ENCODE measurements at regions of chr4 and their contacts with region 1.

Region 1: GRCh38 chr4:39977489-39978377 is at the start of gene PDS5A:
- DNase-seq: peak; percentile 95
- ATAC-seq: peak; percentile 84
- H3K4me3 ChIP-seq: peak within 1 kb of the TSS; percentile 55 to 93 (median 83)
- H3K4me3 Mint-ChIP-seq: peak within 1 kb of the TSS; percentile 91
- H3K27ac ChIP-seq: peak within 1 kb of the TSS; percentile 71 to 83
- H3K27ac Mint-ChIP-seq: peak within 1 kb of the TSS; percentile 93
- H3K4me1 ChIP-seq: peaks cover 11 to 15% of the 10 kb centered on the region in 2 donors
- H3K4me1 Mint-ChIP-seq: peaks cover 31% of the 10 kb centered on the region
- H3K27me3 ChIP-seq: no peaks in the 10 kb centered on the region
- H3K27me3 Mint-ChIP-seq: no peaks in the 10 kb centered on the region
- CTCF ChIP-seq: peak; percentile 79
- total RNA-seq, gene PDS5A: 111 and 116 TPM in 2 replicates

Region 2: GRCh38 chr4:39044364-39044955 is 933.3 kb before region 1 on chr4:
- CTCF ChIA-PET with region 1: no interaction called
- POLR2A ChIA-PET with region 1: no interaction called
- intact Hi-C with region 1: loop called (anchors 10 kb)
- DNase-seq: peak; percentile 99
- ATAC-seq: peak; percentile 85
- H3K4me3 ChIP-seq: peak overlapping the region; percentile 66 to 94 (median 75)
- H3K4me3 Mint-ChIP-seq: peak overlapping the region; percentile 80
- H3K27ac ChIP-seq: peak overlapping the region; percentile 93 to 95
- H3K27ac Mint-ChIP-seq: peak overlapping the region; percentile 90
- H3K4me1 ChIP-seq: peaks cover 45 to 48% of the 10 kb centered on the region in 2 donors
- H3K4me1 Mint-ChIP-seq: peaks cover 59% of the 10 kb centered on the region
- H3K27me3 ChIP-seq: no peaks in the 10 kb centered on the region
- H3K27me3 Mint-ChIP-seq: no peaks in the 10 kb centered on the region
- CTCF ChIP-seq: no peak

Region 3: DNA sequence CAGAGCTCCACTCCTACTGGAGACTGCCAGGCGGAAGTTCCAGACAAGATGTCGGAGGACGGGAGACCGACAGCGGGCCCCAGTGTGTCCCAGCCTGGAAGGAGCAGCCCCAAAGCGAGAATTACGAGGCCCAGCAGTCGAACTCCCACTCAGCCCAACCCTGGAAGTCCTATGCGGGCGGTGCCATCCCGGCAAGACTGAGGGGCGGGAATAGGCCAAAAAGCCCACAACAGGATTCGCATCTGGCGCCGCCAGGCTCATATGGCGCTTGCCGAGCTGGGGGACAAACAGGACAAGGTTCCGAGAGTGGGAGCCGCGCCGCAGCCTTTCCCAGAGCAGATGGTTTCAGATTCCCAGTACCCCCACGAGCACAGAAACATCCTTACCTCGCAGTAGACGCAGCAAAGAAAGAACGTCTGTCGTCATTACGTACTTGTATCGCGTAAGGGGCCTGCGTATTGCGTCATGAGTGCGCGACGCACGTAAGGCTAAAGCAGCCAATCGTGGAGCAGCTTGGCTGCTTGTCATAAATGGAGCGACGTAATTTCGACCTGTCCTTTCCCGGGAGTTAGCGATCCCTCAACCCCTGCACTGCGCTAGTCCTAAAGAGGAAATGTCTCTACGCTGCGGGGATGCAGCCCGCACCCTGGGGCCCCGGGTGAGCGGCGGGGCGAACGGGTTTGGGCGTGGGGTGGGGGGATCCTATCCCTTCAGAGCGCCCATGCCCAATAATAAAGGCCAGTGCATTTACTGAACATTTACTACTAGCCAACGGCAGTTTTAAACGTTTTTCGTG is 519.0 kb before region 1 on chr4 and contains the starts of genes LIAS and RPL9:
- CTCF ChIA-PET with region 1: interaction called, 4 read pairs
- POLR2A ChIA-PET with region 1: interaction called, 6 read pairs
- intact Hi-C with region 1: loop called (anchors 1 kb)
- DNase-seq: peak; percentile 98
- ATAC-seq: peak; percentile 86
- H3K4me3 ChIP-seq: peak within 1 kb of the TSS; percentile 77 to 100 (median 98)
- H3K4me3 Mint-ChIP-seq: peak within 1 kb of the TSS; percentile 97
- H3K27ac ChIP-seq: peak within 1 kb of the TSS; percentile 98 to 99
- H3K27ac Mint-ChIP-seq: peak within 1 kb of the TSS; percentile 99
- H3K4me1 ChIP-seq: peaks cover 19 to 27% of the 10 kb centered on the region in 2 donors
- H3K4me1 Mint-ChIP-seq: peaks cover 38% of the 10 kb centered on the region
- H3K27me3 ChIP-seq: no peaks in the 10 kb centered on the region
- H3K27me3 Mint-ChIP-seq: no peaks in the 10 kb centered on the region
- CTCF ChIP-seq: no peak
- total RNA-seq, gene LIAS: 20.9 and 24.7 TPM in 2 replicates
- total RNA-seq, gene RPL9: 2,031 and 2,048 TPM in 2 replicates

Region 4: DNA sequence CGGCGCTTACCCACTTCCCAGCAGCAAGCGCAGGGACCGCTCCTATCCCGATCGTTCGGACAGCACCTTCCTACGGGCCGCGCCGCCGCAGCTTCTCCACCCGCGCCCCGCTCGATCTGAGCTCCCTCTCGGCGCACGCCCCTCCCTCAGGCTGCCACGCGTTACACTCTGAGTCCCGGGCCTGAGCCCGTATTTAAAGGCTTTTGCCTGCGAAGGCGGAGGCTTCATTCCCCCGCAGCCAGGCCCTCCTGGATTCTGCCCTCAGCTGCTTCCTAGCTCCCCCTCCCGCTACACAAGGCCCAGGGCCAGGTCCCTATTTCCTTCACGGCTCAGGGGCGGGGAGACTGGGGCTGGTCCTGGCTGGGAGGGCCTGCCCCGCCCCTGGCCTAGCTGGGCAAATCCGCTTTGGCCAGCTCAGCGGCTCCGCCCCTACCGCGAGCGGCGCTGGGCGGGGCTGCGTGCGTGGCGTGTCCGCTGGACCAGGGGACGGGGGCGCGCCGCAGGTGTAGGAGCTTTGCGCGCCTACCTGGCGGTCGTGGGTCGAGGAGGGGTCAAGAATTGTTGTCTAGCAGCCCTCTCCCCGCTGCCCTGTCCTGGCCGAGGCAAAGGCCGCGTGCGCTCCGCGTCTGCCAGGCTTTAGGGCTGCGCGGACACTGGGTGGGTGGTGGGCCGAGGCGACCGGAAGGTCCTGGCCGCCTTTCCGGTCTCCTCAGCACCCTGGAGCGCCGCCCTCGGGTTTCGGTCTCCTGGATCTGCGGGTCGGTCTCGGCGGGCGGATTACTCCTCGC is 450.3 kb before region 1 on chr4 and contains the start of gene UGDH:
- CTCF ChIA-PET with region 1: interaction called, 3 read pairs
- POLR2A ChIA-PET with region 1: no interaction called
- intact Hi-C with region 1: loop called (anchors 1 kb)
- DNase-seq: peak; percentile 93
- ATAC-seq: peak; percentile 99
- H3K4me3 ChIP-seq: peak within 1 kb of the TSS; percentile 46 to 98 (median 72)
- H3K4me3 Mint-ChIP-seq: peak within 1 kb of the TSS; percentile 98
- H3K27ac ChIP-seq: peak within 1 kb of the TSS; percentile 51 to 86
- H3K27ac Mint-ChIP-seq: peak within 1 kb of the TSS; percentile 96
- H3K4me1 ChIP-seq: peaks cover 14 to 15% of the 10 kb centered on the region in 2 donors
- H3K4me1 Mint-ChIP-seq: peaks cover 21% of the 10 kb centered on the region
- H3K27me3 ChIP-seq: no peaks in the 10 kb centered on the region
- H3K27me3 Mint-ChIP-seq: no peaks in the 10 kb centered on the region
- CTCF ChIP-seq: no peak
- total RNA-seq, gene UGDH: 18.5 and 25.4 TPM in 2 replicates

Region 5: GRCh38 chr4:39697740-39698423 is 279.9 kb before region 1 on chr4 and contains the start of gene UBE2K:
- CTCF ChIA-PET with region 1: interaction called, 4 read pairs
- POLR2A ChIA-PET with region 1: interaction called, 7 read pairs
- intact Hi-C with region 1: loop called (anchors 1 kb)
- DNase-seq: peak; percentile 94
- ATAC-seq: peak; percentile 92
- H3K4me3 ChIP-seq: peak within 1 kb of the TSS; percentile 74 to 98 (median 96)
- H3K4me3 Mint-ChIP-seq: peak within 1 kb of the TSS; percentile 100
- H3K27ac ChIP-seq: peak within 1 kb of the TSS; percentile 87 to 90
- H3K27ac Mint-ChIP-seq: peak within 1 kb of the TSS; percentile 99
- H3K4me1 ChIP-seq: peaks cover 23 to 29% of the 10 kb centered on the region in 2 donors
- H3K4me1 Mint-ChIP-seq: peaks cover 41% of the 10 kb centered on the region
- H3K27me3 ChIP-seq: no peaks in the 10 kb centered on the region
- H3K27me3 Mint-ChIP-seq: no peaks in the 10 kb centered on the region
- CTCF ChIP-seq: no peak
- total RNA-seq, gene UBE2K: 46.3 and 51.0 TPM in 2 replicates

Region 6: GRCh38 chr4:39889226-39889625 is 88.5 kb before region 1 on chr4:
- CTCF ChIA-PET with region 1: no interaction called
- POLR2A ChIA-PET with region 1: no interaction called
- intact Hi-C with region 1: loop called (anchors 5 kb)
- DNase-seq: no peak
- ATAC-seq: no peak
- H3K4me3 ChIP-seq: no peak overlapping the region
- H3K4me3 Mint-ChIP-seq: no peak overlapping the region
- H3K27ac ChIP-seq: no peak overlapping the region
- H3K27ac Mint-ChIP-seq: no peak overlapping the region
- H3K4me1 ChIP-seq: peaks cover 5 to 10% of the 10 kb centered on the region in 2 donors
- H3K4me1 Mint-ChIP-seq: peaks cover 13% of the 10 kb centered on the region
- H3K27me3 ChIP-seq: no peaks in the 10 kb centered on the region
- H3K27me3 Mint-ChIP-seq: no peaks in the 10 kb centered on the region
- CTCF ChIP-seq: no peak

Region 7: DNA sequence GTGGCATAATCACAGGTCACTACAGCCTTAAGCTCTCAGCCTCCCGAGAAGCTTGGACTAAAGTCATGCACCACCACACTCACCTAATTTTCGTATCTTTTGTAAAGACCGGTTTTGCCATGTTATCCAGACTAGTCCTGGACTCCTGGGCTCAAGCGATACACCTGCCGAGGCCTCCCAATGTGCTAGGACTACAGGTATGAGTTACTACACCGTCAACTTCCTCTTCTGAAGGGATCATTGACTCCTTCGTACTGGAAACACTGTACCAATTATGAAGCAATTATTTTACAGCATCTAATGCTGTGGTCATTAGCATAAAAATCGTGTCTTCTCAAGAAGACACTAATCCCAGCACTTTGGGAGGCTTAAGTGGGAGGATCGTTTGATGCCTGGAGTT is 35.2 kb before region 1 on chr4:
- CTCF ChIA-PET with region 1: interaction called, 4 read pairs
- POLR2A ChIA-PET with region 1: interaction called, 5 read pairs
- intact Hi-C with region 1: loop called (anchors 1 kb)
- DNase-seq: peak; percentile 47
- ATAC-seq: no peak
- H3K4me3 ChIP-seq: peak overlapping the region in 2 of 5 experiments; percentile 4 to 28
- H3K4me3 Mint-ChIP-seq: peak overlapping the region; percentile 40
- H3K27ac ChIP-seq: peak overlapping the region; percentile 23 to 55
- H3K27ac Mint-ChIP-seq: peak overlapping the region; percentile 23
- H3K4me1 ChIP-seq: peaks cover 47 to 59% of the 10 kb centered on the region in 2 donors
- H3K4me1 Mint-ChIP-seq: peaks cover 72% of the 10 kb centered on the region
- H3K27me3 ChIP-seq: no peaks in the 10 kb centered on the region
- H3K27me3 Mint-ChIP-seq: no peaks in the 10 kb centered on the region
- CTCF ChIP-seq: no peak

Region 8: DNA sequence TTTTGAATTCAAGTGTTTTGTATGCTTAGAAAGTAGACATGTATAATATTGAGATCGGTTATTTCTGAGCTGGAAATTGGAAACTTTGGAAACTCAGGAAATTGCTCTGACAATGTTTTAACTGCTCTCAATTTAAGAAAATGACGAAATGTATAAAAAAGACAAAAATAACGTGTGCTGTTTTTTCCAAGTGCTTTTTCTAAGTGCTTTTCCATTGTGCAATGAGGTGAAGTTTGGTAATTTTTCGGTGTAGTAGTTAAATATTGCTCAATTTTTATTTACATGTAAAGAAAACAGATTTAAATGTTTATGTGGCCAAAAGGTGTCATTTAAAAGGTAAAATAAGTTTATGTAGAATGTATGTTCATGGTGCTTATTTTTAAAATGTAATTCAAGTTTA is 179.7 kb after region 1 on chr4:
- CTCF ChIA-PET with region 1: no interaction called
- POLR2A ChIA-PET with region 1: no interaction called
- intact Hi-C with region 1: no loop called
- DNase-seq: no peak
- ATAC-seq: no peak
- H3K4me3 ChIP-seq: no peak overlapping the region
- H3K4me3 Mint-ChIP-seq: no peak overlapping the region
- H3K27ac ChIP-seq: no peak overlapping the region
- H3K27ac Mint-ChIP-seq: no peak overlapping the region
- H3K4me1 ChIP-seq: peaks cover 3 to 9% of the 10 kb centered on the region in 2 donors
- H3K4me1 Mint-ChIP-seq: peaks cover 14% of the 10 kb centered on the region
- H3K27me3 ChIP-seq: no peaks in the 10 kb centered on the region
- H3K27me3 Mint-ChIP-seq: no peaks in the 10 kb centered on the region
- CTCF ChIP-seq: no peak

Measured in B cell (primary cell).